ENCODE measurements at regions of chr3 and their contacts with region 1.

Region 1: GRCh38 chr3:88003115-88003755 is 55.6 kb downstream of the CGGBP1 start:
- DNase-seq: no peak
- H3K4me3 ChIP-seq: no peak overlapping the region
- CTCF ChIP-seq: peak; percentile 46

Region 2: GRCh38 chr3:87771341-87772192 is 231.7 kb before region 1 on chr3:
- CTCF ChIA-PET with region 1: interaction called, 19 read pairs
- POLR2A ChIA-PET with region 1: no interaction called
- DNase-seq: no peak
- H3K4me3 ChIP-seq: no peak overlapping the region
- CTCF ChIP-seq: peak; percentile 65

Region 3: DNA sequence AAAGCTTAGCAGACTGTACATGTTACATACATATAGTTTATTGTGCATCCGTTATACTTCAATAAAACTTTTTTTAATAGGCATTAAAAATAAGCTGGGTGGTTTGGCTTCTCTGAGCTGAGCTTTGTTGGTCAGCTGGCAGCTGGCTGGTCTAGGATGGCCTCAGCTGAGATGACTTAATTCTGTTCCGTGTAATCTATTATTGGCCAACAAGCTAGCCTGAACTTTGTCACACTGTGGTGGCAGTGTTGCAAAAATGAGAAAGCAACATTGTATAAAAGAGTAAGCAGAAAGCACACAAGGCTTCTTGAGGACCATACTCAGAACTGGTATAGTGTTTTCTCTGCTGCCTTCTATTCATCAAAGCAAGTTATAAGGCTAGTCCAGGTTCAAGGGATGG is 10.4 kb after region 1 on chr3:
- CTCF ChIA-PET with region 1: interaction called, 16 read pairs
- POLR2A ChIA-PET with region 1: no interaction called
- DNase-seq: no peak
- H3K4me3 ChIP-seq: no peak overlapping the region
- CTCF ChIP-seq: no peak

Region 4: DNA sequence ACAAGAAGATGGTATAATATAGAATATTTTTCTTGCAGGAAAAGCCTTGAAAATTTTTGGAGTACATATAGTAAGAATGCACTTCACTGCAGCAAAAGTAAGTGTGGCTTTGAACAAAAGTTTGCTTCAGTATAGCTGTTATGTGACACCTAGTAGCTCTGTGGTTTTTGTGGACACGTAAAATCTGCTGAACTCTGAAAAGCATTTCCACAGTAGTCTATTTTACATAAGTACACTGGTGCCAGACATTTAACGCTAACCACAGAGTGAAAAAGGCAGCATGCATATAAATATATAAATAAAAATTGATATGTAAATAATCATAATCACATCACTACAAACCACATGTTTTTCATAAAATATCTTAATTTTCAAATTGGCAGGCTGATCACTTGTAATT is 15.8 kb after region 1 on chr3:
- CTCF ChIA-PET with region 1: interaction called, 16 read pairs
- POLR2A ChIA-PET with region 1: no interaction called
- DNase-seq: no peak
- H3K4me3 ChIP-seq: no peak overlapping the region
- CTCF ChIP-seq: no peak

Region 5: GRCh38 chr3:88263417-88264100 is 260.3 kb after region 1 on chr3:
- CTCF ChIA-PET with region 1: no interaction called
- POLR2A ChIA-PET with region 1: no interaction called
- DNase-seq: no peak
- H3K4me3 ChIP-seq: no peak overlapping the region
- CTCF ChIP-seq: no peak

Measured in AG04449 (cell line).